ENCODE measurements at regions of chr20 and their contacts with region 1.

Region 1: GRCh38 chr20:297098-297924 is at the start of gene ZCCHC3:
- DNase-seq: peak; percentile 94 to 95
- ATAC-seq: peak; percentile 92 to 96
- H3K4me3 ChIP-seq: peak within 1 kb of the TSS; percentile 75
- H3K27ac ChIP-seq: peak within 1 kb of the TSS; percentile 95 to 97
- H3K4me1 ChIP-seq: peaks cover 33% of the 10 kb centered on the region
- CTCF ChIP-seq: peak; percentile 31; the same call in 2 of the 3 replicates
- EP300 ChIP-seq: no peak
- POLR2A ChIP-seq: peak; percentile 51
- RAD21 ChIP-seq: peak; percentile 5 to 46; a peak in 3 of 5 replicates
- polyA plus RNA-seq, gene ZCCHC3: 17.4 and 19.8 TPM in 2 replicates

Region 2: DNA sequence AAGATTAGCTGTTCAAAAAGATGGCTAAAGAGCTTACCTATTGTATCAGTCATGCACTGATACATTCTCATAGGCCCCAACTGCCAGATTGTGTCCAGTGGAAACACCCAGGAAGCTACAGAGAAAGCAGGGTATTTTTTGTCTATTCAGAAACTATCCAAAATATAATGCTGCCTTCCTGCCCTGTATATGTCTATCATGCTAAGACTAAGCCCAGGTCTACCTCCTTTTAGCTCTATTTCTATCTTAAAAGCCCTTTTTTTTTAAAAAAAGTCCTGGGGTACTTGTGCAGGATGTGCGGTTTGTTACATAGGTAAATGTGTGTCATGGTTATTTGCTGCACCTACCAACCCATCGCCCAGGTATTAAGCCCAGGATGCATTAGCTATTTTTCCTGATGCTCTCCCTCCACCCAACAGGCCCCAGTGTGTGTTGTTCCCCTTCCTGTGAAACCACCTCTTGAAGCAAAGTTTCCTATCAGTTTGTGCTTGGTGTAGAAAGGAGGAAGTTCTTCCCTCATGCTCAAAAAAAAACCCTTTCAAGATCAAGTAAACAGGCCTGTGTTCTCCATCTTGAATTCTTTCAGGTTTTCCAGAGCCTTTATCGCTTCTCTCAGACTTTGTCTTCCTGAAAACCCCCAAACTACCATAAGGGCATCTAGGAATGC is 69.7 kb before region 1 on chr20:
- CTCF ChIA-PET with region 1: no interaction called
- POLR2A ChIA-PET with region 1: no interaction called
- DNase-seq: no peak
- ATAC-seq: no peak
- H3K4me3 ChIP-seq: no peak overlapping the region
- H3K27ac ChIP-seq: no peak overlapping the region
- H3K4me1 ChIP-seq: no peaks in the 10 kb centered on the region
- CTCF ChIP-seq: no peak
- EP300 ChIP-seq: no peak
- POLR2A ChIP-seq: no peak
- RAD21 ChIP-seq: no peak

Region 3: DNA sequence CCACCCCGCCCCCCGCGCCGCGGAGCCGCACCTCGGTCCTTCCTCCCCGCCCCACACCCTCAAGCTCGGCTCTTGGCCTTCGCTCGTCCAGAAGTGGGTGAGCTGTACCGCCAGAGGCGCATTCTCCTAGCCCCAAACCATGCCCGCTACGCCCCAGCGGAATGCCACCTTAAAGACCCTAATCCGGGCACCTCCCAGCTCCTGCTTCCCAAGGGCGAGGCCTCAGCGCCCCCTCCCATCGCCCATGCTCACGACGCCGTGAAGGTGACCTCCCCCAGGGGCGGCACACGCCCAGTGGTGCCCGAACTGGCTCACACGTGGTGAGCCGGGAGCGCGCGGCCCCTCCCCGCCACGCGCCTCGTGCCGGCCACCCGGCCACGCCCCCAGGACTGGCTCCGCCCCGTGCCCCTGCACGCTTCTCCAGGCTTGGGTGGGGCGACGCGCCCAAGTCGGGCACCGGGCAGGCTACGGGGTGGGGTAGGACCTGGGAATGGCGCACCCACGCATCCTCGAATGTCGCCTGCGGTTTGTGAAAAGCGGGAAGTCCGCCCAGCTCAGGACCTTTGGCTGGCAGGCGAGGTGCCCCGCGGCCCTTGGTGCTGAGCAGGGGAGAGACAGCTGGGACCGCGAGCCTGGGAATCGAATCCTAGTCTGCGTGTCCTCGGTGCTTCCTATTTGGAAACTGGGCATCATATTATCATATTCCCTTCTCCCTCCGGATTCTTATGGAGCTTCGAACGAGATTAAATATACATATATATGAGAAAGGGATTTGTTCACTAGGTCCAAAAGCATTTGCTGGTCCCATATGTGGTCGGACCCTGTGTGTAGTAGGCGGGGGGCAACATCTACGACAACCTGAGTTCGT is 27.1 kb after region 1 on chr20:
- CTCF ChIA-PET with region 1: interaction called, 111 read pairs
- POLR2A ChIA-PET with region 1: interaction called, 69 read pairs
- DNase-seq: peak; percentile 93 to 96
- ATAC-seq: peak; percentile 50 to 81
- H3K4me3 ChIP-seq: peak overlapping the region; percentile 95
- H3K27ac ChIP-seq: peak overlapping the region; percentile 95 to 99
- H3K4me1 ChIP-seq: peaks cover 28% of the 10 kb centered on the region
- CTCF ChIP-seq: no peak; the same call in 2 of the 3 replicates
- EP300 ChIP-seq: no peak
- POLR2A ChIP-seq: peak; percentile 63
- RAD21 ChIP-seq: peak in 1 of 2 experiments; percentile 43; a peak in 2 of 5 replicates

Measured in A549 (cell line).